ENCODE measurements at regions of chr1 and their contacts with region 1.

Region 1: GRCh38 chr1:42747125-42747524 is 7.1 kb upstream of the CLDN19 start:
- DNase-seq: peak; percentile 61
- H3K4me3 Mint-ChIP-seq: no peak overlapping the region
- H3K27ac Mint-ChIP-seq: no peak overlapping the region
- H3K4me1 Mint-ChIP-seq: no peaks in the 10 kb centered on the region
- H3K27me3 Mint-ChIP-seq: no peaks in the 10 kb centered on the region

Region 2: DNA sequence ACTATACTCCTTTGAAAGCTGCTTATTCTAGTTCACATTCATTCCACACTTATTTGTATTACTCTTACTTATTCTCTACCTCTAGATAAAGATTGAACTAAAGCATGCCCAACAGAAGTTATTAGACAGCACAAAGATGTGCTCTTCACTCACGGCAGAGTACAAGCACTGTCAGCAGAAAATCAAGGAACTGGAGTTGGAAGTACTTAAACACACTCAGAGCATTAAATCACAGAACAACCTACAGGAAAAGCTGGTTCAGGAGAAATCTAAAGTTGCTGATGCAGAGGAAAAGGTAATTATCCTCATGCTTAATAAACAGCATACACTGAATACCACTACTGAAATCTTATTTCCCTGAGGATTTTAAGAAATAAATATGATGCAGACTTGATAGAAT is 170.2 kb before region 1 on chr1:
- CTCF ChIA-PET with region 1: interaction called, 17 read pairs
- DNase-seq: no peak
- H3K4me3 Mint-ChIP-seq: no peak overlapping the region
- H3K27ac Mint-ChIP-seq: no peak overlapping the region
- H3K4me1 Mint-ChIP-seq: no peaks in the 10 kb centered on the region
- H3K27me3 Mint-ChIP-seq: no peaks in the 10 kb centered on the region

Measured in activated naive CD4-positive, alpha-beta T cell treated with anti-CD3 and anti-CD28 coated beads, Interleukin-2, amount 10 ng/mL, durations not matched to agents 7 days and 5 days (primary cell).